ENCODE measurements at regions of chr11 and their contacts with region 1.

Region 1: DNA sequence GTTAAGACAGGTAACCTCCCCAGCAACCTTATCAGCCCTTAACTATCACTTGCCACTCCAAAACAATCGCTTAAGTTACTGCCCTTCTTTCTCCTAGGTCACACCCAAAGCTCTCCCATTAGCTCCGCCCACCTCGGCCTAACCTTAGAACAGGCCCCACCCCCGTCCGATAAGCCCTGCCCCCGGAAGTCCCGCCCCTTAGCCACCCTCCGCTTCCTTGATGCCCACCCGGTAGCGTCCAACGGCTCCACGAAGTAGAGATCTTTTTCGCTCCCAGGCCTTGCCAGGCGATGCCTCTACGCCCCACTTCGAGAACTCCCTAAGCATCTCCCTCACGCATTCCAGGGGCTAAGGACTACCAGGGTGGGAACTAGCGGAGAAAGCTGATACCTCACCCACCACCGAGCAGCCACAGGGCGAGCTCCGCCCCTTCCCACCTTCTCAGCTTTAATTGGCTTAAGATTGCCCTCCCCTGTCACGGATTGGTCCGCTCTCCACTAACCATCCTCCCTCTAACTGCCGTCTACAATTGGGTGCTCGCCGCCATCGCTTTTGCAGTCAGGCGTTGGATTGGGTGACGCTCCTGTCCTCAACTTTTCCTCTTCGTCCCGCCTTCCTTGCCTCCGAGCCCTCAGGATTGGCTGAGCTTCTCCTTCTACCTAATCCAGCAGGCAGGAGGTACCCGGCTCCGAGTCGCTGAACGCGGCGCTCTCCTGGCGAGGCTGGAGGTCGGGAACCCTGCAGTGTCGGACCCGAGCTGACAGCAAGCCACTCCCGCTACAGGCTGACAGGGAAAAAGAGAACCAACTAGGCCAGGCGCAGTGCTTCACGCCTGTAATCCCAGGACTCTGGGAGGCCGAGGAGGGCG is at the start of gene ZBTB3:
- DNase-seq: peak; percentile 100
- H3K4me3 ChIP-seq: peak within 1 kb of the TSS; percentile 62
- H3K27ac ChIP-seq: peak within 1 kb of the TSS; percentile 88
- H3K4me1 ChIP-seq: peaks cover 6% of the 10 kb centered on the region
- H3K27me3 ChIP-seq: no peaks in the 10 kb centered on the region
- CTCF ChIP-seq: no peak
- total RNA-seq, gene ZBTB3: 12.0 and 13.1 TPM in 2 replicates

Region 2: GRCh38 chr11:61733120-61733978 is 1020.6 kb before region 1 on chr11:
- CTCF ChIA-PET with region 1: no interaction called
- POLR2A ChIA-PET with region 1: no interaction called
- intact Hi-C with region 1: no loop called
- DNase-seq: peak; percentile 93
- H3K4me3 ChIP-seq: no peak overlapping the region
- H3K27ac ChIP-seq: no peak overlapping the region
- H3K4me1 ChIP-seq: no peaks in the 10 kb centered on the region
- H3K27me3 ChIP-seq: no peaks in the 10 kb centered on the region
- CTCF ChIP-seq: peak; percentile 100

Region 3: GRCh38 chr11:62988276-62988675 is 234.3 kb after region 1 on chr11:
- CTCF ChIA-PET with region 1: interaction called, 10 read pairs
- POLR2A ChIA-PET with region 1: no interaction called
- intact Hi-C with region 1: no loop called
- DNase-seq: no peak
- H3K4me3 ChIP-seq: no peak overlapping the region
- H3K27ac ChIP-seq: no peak overlapping the region
- H3K4me1 ChIP-seq: no peaks in the 10 kb centered on the region
- H3K27me3 ChIP-seq: no peaks in the 10 kb centered on the region
- CTCF ChIP-seq: no peak